RWPE1 (cell line): ENCODE measurements at regions of chr19 and their contacts with region 1.

Region 1: DNA sequence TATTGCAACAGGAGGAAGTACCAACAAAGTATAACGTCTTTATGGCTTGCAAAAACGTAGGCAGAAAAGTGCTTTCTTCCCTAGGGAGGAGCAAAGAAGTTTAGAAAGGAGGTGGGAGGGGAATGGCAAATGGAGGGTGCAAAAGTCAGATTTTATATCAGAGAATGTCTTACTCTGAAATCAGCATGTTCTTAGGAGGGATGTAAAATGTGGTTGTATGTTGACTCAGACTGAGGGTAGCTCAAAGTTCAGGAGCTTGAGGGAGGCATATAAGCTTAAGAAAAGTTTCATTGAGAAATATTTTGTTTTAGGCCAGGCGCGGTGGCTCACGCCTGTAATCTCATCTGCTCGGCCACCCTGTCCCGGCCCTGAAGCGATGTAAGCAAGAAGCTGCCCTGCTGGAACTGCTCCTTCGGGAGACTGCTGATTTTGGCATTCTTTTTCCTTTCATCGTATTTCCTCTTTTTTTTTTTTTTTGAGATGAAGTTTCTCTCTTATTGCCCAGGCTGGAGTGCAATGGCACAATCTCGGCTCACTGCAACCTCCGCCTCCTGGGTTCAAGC is 1.8 kb downstream of the ZNF90 start:
- DNase-seq: no peak
- H3K27ac ChIP-seq: no peak overlapping the region
- CTCF ChIP-seq: no peak

Region 2: DNA sequence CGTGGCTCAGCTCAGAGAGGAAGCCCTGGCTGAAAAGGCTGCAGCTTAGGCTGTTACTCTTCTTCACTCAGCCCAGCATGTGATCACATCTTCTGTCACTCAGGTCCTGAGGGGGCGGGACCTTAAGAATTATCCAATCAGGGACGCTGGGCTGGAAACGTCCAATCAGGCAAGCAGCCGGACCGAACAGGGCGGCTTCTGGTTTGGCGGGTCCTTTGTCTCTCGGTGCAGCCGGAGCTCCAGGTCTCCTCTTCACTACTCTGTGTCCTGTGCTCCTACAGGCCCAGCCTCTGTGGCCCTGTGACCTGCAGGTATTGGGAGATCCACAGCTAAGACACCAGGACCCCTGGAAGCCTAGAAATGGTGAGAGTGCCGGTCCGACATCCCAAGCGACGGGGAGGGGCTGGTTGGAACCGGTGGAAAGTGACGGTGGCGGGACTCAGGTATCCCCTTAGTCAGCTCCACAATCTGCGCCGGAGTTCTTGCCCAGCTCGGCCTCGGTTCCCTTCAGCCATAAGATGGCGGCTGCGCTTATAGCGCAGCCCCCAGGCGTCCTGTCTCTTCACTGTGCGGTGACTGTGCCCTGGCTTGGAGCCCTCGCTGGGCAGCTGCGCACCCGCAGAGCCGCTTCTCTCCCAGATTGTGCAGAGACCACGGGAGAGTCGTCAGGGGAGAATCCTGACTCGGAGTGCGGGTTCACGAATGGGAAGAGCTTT is 178.7 kb before region 1 on chr19 and contains the start of gene ZNF93:
- CTCF ChIA-PET with region 1: no interaction called
- POLR2A ChIA-PET with region 1: interaction called, 11 read pairs
- DNase-seq: peak; percentile 83
- H3K27ac ChIP-seq: peak within 1 kb of the TSS; percentile 78
- CTCF ChIP-seq: no peak

Region 3: DNA sequence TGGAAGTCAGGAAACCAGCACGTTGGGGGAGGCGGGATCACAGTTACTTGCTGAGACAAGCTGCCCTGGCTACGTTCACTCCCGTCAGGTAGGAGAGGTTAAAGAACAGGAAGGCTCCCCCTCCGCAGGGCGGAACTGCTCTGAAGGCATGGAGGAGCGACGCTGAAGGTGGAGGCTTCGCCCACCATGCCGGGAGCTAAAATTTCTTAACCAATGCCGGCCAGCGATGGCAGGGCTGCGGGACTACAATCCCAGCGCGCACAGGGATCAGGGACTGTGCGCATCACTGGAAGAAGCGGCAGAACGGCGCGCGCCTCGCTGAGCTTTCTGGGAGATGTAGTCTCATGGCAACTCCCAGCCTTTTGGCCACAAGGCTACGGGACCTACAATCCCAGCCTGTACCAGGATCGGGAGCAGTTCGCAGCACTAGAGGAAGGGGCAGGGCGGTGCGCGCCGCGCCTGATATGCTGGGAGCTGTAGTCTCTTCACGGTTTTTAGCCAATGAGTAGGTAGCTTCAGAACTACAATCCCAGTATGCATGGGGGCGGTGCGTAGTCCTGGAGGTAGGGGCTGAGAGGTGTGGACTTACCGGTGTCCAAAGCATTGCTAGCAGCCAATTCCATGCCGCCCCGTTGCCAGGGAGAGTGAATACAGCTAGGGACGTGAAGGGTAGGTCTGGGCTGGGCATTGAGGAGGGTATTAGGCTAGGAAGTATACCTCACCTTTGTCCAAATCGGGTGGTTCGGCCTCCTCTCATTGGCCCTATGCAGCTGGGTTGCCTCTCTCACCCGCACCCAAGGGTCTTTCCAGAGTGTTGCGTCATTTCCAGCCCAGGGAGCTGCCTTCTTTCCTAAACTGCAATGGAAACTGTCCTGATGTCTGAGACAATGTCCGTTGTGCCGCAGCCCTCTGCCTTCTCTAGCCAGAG is 27.5 kb before region 1 on chr19:
- CTCF ChIA-PET with region 1: no interaction called
- POLR2A ChIA-PET with region 1: no interaction called
- DNase-seq: peak; percentile 79
- H3K27ac ChIP-seq: peak overlapping the region; percentile 85
- CTCF ChIP-seq: no peak

Region 4: DNA sequence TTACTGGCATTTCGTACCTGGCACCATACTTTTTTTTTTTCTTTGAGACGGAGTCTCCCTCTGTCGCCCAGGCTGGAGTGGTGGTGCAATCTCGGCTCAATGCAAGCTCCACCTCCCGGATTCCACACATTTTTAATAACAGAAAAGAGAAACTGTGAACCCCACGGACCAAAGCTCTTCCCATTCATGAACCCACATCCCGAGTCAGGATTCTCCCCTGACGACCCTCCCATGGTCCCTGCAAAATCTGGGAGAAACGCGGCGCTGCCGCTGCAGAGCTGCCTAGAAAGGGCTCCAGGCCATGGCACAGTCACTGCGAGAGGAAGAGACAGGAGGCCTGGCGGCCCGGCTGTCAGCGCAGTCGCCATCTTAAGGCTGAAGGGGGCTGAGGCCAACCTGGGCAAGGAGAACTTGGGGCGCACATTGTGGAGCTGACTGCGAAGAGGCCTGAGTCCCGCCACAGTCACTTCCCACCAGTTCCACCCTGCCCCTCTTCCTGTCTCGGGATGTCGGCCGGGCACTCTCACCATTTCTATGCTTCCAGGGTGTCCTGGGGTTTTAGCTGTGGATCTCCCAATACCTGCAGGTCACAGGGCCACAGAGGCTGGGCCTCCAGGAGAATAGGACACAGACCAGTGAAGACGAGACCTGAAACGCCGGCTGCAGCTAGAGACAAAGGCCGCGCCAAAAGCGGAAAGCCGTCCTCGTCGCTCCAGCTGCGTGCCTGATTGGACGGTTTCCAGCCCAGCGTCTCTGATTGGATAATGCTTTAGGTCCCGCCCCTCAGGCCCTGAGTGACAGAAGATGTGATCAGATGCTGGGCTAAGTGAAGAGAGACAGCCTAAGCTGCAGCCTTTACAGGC is 158.4 kb after region 1 on chr19:
- CTCF ChIA-PET with region 1: no interaction called
- POLR2A ChIA-PET with region 1: no interaction called
- DNase-seq: peak; percentile 10
- H3K27ac ChIP-seq: no peak overlapping the region
- CTCF ChIP-seq: no peak